Cardiac septum (tissue), 1 donor: ENCODE measurements at regions of chr16 and their contacts with region 1.

Region 1: DNA sequence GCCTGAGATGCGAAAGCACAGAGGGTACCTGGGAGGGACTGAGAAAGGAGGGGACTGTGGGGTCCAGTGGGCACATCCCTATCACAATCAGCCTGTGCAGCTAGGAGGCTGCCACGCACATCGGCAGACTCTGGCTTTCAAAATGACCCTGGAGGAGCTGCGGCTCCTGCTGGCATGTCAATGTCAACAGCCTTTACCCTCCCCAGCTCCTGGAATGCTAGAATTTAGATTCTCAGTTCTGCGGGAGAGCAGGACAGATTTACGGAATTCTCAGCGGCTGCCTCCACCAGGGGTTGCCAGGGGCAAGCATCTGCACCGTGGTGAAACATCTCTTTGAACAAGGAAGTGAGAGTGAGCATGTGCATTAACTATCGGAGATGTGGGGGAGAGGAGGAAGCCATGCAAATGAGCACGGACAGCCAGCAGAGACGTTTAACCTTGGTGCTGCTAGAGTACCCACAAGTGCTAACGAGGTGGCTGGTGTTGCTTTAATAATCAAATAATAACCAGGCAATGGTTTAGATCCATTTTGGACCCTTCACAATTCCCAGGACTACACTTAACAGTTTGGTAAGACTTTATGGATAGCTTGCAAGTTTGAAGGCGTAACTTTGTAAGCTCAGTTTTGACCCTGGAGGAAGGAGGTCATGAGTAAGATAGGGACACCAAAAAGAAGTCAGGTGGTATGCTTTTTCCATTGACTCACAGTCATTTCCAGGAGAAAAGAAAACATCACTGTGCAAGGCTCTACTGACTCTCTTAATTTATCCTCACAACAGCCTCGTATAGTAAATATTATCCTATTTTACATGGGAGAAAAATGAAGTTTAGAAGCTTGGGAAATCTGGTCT is 54.1 kb downstream of the XYLT1 start:
- DNase-seq: no peak

Region 2: GRCh38 chr16:16904601-16905000 is 512.1 kb before region 1 on chr16:
- intact Hi-C with region 1: no loop called
- DNase-seq: no peak

Region 3: GRCh38 chr16:17277977-17278381 is 138.7 kb before region 1 on chr16:
- intact Hi-C with region 1: loop called (anchors 5 kb)
- DNase-seq: no peak

Region 4: GRCh38 chr16:17397499-17397891 is 19.2 kb before region 1 on chr16:
- intact Hi-C with region 1: no loop called
- DNase-seq: no peak

Region 5: DNA sequence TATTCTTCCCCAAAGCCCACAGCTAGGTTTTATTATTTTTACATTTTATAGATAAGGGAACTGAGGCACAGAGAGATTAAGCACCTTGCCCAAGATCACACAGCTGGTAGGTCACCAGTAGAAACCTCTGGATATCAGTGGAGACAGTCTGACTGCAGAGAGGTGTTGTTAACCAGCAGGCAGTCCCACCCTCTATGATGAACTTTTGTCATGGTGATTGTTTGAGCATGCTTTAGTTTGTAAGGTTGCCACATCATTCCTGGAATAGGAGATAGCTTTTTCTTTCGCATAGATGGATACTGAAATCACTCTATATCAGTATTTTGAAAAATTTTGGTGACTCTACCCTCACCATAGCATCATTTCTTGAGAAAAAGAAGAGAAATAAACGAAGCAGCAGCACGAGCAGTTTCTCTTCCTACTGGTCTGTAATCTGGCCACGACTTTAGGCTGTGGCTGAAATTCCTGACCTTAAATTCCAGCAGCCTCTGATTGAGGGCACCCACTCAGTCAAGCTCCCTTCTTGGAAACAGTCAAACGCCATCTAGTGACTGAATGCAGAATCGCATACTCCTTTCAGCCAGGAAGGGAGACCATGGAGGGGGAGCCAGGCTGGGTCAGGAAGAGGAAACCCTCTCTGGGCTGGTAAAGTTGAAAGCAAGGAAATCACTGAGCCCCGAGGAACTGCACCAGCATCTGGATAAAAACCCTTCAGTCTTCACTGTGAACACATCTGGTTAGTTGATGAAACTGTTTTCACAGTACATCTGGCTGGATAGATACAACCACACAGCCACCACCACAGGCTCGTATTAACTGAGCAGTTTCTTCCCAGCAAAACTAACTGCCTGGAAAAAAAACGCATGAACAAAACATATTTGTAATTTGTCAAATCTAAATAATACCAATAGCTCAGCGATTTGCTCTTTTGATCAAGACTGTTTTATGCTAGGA is 162.5 kb after region 1 on chr16:
- intact Hi-C with region 1: no loop called
- DNase-seq: no peak